ENCODE measurements at regions of chrX and their contacts with region 1.

Region 1: DNA sequence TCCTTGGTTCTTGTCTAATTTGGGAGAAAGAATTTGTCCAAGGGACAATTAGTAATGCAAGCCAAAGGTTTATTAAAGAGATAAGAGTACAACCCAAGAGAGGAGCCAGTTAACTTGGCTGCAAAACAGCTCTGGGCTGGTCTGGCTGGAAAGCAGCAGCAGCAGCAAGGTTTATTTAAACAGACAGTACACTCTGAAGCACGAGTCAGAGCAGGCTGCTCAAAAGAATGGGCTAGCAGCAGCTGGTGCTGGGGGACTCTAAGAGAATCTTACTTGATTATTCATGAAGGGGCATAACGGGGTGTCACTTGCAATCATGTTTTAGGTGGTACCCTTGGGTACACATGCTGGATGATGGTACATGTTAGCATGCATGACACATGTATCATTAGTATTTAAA is 17.1 kb upstream of the CT47C1 start:
- DNase-seq: peak; percentile 4
- ATAC-seq: 0 out of 2 replicates have a peak, but pooled peaks have one; percentile 29
- H3K4me3 ChIP-seq: no peak overlapping the region
- H3K27ac ChIP-seq: no peak overlapping the region
- H3K4me1 ChIP-seq: no peaks in the 10 kb centered on the region
- H3K27me3 ChIP-seq: no peaks in the 10 kb centered on the region
- CTCF ChIP-seq: no peak
- POLR2A ChIP-seq: no peak
- RAD21 ChIP-seq: no peak

Region 2: DNA sequence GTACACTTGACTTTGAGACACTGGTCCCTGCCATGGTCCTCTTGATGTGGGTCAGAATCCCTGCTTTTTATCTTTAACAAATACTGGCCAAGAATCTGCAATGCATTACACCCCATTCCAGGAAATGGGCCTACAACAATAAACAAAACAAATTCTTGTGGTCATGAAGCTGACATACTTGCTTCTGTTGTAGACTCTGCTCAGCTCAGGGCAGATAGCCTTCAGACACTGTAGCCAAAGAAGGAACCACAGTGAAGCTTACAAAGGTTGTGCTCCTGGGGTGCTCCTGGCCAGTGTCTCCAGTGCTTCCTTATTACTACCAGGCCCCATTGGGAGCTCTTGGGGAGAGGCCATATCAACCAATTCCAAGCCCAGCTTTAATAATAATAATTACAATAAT is 50.1 kb after region 1 on chrX:
- CTCF ChIA-PET with region 1: no interaction called
- POLR2A ChIA-PET with region 1: no interaction called
- dilution Hi-C with region 1: no loop called
- in situ Hi-C with region 1: no loop called
- intact Hi-C with region 1: no loop called
- DNase-seq: peak; percentile 19
- ATAC-seq: no peak
- H3K4me3 ChIP-seq: no peak overlapping the region
- H3K27ac ChIP-seq: no peak overlapping the region
- H3K4me1 ChIP-seq: no peaks in the 10 kb centered on the region
- H3K27me3 ChIP-seq: peaks cover 7% of the 10 kb centered on the region
- CTCF ChIP-seq: no peak
- POLR2A ChIP-seq: no peak
- RAD21 ChIP-seq: no peak

Region 3: DNA sequence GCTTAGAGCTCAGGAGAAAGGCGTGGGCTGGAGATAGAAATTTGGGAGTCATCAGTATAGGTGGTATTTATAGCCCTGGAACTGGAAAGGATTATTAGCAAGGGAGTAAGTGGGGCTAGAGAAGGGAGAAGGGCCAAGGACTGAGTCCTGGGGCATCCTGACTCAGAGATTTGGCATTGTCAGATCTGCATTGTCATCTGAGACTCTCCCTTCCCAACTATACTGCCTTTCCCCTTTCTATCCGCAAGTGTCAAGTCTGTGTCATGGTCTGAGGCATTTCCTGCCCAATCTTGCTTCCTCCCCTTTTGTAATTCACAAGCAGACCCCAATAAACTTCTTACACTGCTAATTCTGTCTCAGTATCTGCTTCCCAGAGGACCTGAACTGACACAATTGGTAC is 319.0 kb after region 1 on chrX:
- CTCF ChIA-PET with region 1: no interaction called
- POLR2A ChIA-PET with region 1: no interaction called
- dilution Hi-C with region 1: no loop called
- in situ Hi-C with region 1: no loop called
- intact Hi-C with region 1: no loop called
- DNase-seq: peak; percentile 40
- ATAC-seq: no peak
- H3K4me3 ChIP-seq: no peak overlapping the region
- H3K27ac ChIP-seq: no peak overlapping the region
- H3K4me1 ChIP-seq: peaks cover 3% of the 10 kb centered on the region; the same call in 1 of the 2 replicates
- H3K27me3 ChIP-seq: no peaks in the 10 kb centered on the region
- CTCF ChIP-seq: no peak
- POLR2A ChIP-seq: no peak
- RAD21 ChIP-seq: no peak

Region 4: GRCh38 chrX:119389214-119389613 is 333.5 kb after region 1 on chrX:
- CTCF ChIA-PET with region 1: no interaction called
- POLR2A ChIA-PET with region 1: interaction called, 14 read pairs
- dilution Hi-C with region 1: no loop called
- in situ Hi-C with region 1: no loop called
- intact Hi-C with region 1: no loop called
- DNase-seq: no peak
- ATAC-seq: no peak
- H3K4me3 ChIP-seq: no peak overlapping the region
- H3K27ac ChIP-seq: no peak overlapping the region
- H3K4me1 ChIP-seq: no peaks in the 10 kb centered on the region
- H3K27me3 ChIP-seq: no peaks in the 10 kb centered on the region; the same call in 1 of the 2 replicates
- CTCF ChIP-seq: no peak
- POLR2A ChIP-seq: no peak
- RAD21 ChIP-seq: no peak